PC-3 (cell line): ENCODE measurements at regions of chr1 and their contacts with region 1.

Region 1: GRCh38 chr1:100866041-100866900 is 28.4 kb downstream of the EXTL2 start:
- DNase-seq: peak; percentile 59
- ATAC-seq: peak; percentile 62
- H3K4me3 ChIP-seq: peak overlapping the region; percentile 16; the same call in 1 of the 2 replicates
- H3K27ac ChIP-seq: no peak overlapping the region
- H3K4me1 ChIP-seq: peaks cover 11% of the 10 kb centered on the region
- H3K27me3 ChIP-seq: no peaks in the 10 kb centered on the region
- CTCF ChIP-seq: peak; percentile 86

Region 2: GRCh38 chr1:99808391-99809115 is 1057.7 kb before region 1 on chr1:
- CTCF ChIA-PET with region 1: no interaction called
- POLR2A ChIA-PET with region 1: no interaction called
- intact Hi-C with region 1: loop called (anchors 5 kb)
- DNase-seq: peak; percentile 93
- ATAC-seq: peak; percentile 91
- H3K4me3 ChIP-seq: peak overlapping the region; percentile 46
- H3K27ac ChIP-seq: no peak overlapping the region
- H3K4me1 ChIP-seq: peaks cover 10% of the 10 kb centered on the region; the same call in 1 of the 2 replicates
- H3K27me3 ChIP-seq: peaks cover 24% of the 10 kb centered on the region
- CTCF ChIP-seq: peak; percentile 76

Region 3: GRCh38 chr1:100606438-100606837 is 259.8 kb before region 1 on chr1:
- CTCF ChIA-PET with region 1: no interaction called
- POLR2A ChIA-PET with region 1: no interaction called
- intact Hi-C with region 1: loop called (anchors 1 kb)
- DNase-seq: peak; percentile 76
- ATAC-seq: peak; percentile 73
- H3K4me3 ChIP-seq: no peak overlapping the region
- H3K27ac ChIP-seq: no peak overlapping the region
- H3K4me1 ChIP-seq: no peaks in the 10 kb centered on the region
- H3K27me3 ChIP-seq: no peaks in the 10 kb centered on the region
- CTCF ChIP-seq: peak; percentile 93

Region 4: GRCh38 chr1:100834777-100835660 is 31.3 kb before region 1 on chr1:
- CTCF ChIA-PET with region 1: interaction called, 3 read pairs
- POLR2A ChIA-PET with region 1: no interaction called
- intact Hi-C with region 1: loop called (anchors 2 kb)
- DNase-seq: peak; percentile 33
- ATAC-seq: peak; percentile 65
- H3K4me3 ChIP-seq: no peak overlapping the region
- H3K27ac ChIP-seq: no peak overlapping the region
- H3K4me1 ChIP-seq: no peaks in the 10 kb centered on the region
- H3K27me3 ChIP-seq: no peaks in the 10 kb centered on the region
- CTCF ChIP-seq: peak; percentile 71

Region 5: DNA sequence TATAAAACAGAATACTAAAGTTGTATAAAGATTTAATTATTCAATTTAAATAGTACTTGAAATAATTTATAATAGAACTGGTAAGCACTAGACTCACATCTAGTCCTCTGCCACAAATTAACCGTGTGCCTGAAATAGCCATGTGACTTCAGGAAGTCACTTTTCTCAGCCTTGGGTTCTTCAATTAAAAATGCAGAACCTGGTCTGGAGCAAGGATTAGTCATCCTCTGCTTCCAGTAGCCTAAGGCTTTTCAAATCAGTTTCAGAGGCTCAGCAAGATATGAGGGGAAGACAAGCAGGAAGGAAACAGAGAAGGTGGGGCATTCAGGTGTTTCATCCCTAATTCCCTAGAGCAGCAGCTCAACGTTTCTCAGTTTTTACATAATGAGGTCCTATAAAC is 136.3 kb after region 1 on chr1:
- CTCF ChIA-PET with region 1: no interaction called
- POLR2A ChIA-PET with region 1: no interaction called
- intact Hi-C with region 1: no loop called
- DNase-seq: peak; percentile 62
- ATAC-seq: peak; percentile 86
- H3K4me3 ChIP-seq: no peak overlapping the region
- H3K27ac ChIP-seq: no peak overlapping the region
- H3K4me1 ChIP-seq: peaks cover 18% of the 10 kb centered on the region
- H3K27me3 ChIP-seq: no peaks in the 10 kb centered on the region
- CTCF ChIP-seq: no peak

Region 6: GRCh38 chr1:101167891-101168290 is 301.6 kb after region 1 on chr1:
- CTCF ChIA-PET with region 1: no interaction called
- POLR2A ChIA-PET with region 1: no interaction called
- intact Hi-C with region 1: no loop called
- DNase-seq: no peak
- ATAC-seq: no peak
- H3K4me3 ChIP-seq: no peak overlapping the region
- H3K27ac ChIP-seq: no peak overlapping the region
- H3K4me1 ChIP-seq: no peaks in the 10 kb centered on the region
- H3K27me3 ChIP-seq: no peaks in the 10 kb centered on the region
- CTCF ChIP-seq: no peak